Uterus (tissue), 4 donors: ENCODE measurements at regions of chr17 and their contacts with region 1.

Region 1: GRCh38 chr17:67879662-67880061 is 54.4 kb downstream of the BPTF start:
- DNase-seq: no peak
- H3K4me3 ChIP-seq: no peak overlapping the region
- H3K27ac ChIP-seq: no peak overlapping the region
- H3K4me1 ChIP-seq: no peaks in the 10 kb centered on the region
- H3K27me3 ChIP-seq: no peaks in the 10 kb centered on the region
- CTCF ChIP-seq: no peak
- POLR2A ChIP-seq: no peak

Region 2: DNA sequence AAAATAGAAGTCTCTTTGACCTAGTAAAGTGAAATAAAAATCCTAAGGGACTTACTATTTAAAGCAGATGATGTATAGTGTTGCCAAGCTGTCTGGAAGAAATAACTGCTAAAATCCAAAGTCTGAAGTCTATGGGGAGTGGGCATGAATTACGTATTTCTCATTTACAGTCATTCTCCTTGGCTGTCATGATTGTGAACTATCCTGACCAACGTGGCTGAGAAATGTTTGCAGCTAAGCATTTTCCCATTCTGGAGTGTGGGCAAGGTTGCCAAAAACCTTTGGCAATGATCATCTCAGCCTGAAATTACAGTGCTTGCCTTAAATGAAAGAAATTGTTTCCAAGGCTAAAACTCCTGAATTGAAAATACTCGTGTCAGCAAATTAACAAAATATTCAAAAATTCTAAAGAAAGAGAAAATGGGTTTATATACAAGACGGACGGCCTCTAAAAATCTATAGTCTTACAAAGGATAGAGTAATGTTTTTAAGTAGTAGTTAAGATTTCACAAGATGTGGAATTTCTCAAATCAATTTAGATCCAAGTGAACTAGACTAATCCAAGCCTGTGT is 758.3 kb before region 1 on chr17:
- intact Hi-C with region 1: loop called (anchors 5 kb)
- DNase-seq: no peak
- H3K4me3 ChIP-seq: no peak overlapping the region
- H3K27ac ChIP-seq: no peak overlapping the region
- H3K4me1 ChIP-seq: no peaks in the 10 kb centered on the region
- H3K27me3 ChIP-seq: no peaks in the 10 kb centered on the region
- CTCF ChIP-seq: no peak
- POLR2A ChIP-seq: no peak